Activated T-helper 1 cell treated with anti-CD3 and anti-CD28 coated beads, Interleukin-12 subunit alpha, Interleukin-12 subunit beta, Interleukin-2, Interleukin-4 antibody, amounts not matched to agents 30 ng/mL and 10 ng/mL and 1 ng/mL, durations not matched to agents 14 hours and 24 hours and 36 hours (primary cell): ENCODE measurements at regions of chr12 and their contacts with region 1.

Region 1: DNA sequence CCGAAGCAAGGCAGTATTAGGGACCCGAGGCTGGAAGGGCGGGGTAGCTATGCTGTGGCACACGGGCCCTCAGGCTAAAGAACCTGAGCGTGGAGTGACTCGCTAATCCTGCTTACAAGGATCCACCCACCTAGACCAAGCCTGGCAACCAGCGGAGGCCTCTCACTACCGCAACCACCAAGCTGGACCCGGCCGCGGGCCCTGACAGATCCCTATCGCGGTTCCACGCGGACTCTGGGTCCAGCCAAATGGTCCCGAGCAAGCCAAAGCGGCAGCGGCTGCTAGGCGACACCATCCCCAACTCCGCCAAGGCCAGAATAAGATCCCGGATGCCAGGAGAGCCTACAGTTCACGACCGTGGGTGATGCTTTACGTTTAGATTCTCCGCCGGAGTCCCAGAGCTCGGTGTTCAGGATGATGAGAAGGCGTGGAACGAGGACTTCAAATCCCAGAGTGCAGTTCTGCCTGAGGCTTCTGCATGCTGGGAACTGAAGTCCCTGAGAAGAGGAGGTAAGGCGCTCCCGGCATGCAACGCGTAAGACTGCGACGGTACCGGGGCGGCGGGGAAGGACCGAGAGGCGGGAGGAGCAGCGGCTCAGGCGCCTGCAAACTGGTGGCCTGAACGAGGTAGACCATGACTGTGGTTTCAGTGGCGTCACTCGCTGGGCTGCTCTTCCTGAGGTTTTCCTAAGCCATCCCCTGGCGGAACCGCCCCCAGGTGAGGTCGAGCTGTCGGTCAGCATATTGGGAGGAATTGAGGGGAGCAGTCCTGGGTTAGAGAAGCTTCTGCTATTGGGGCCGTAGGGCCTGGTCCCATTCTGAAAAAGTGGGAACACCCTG is at the starts of genes CEP290 and TMTC3:
- DNase-seq: peak; percentile 92
- H3K4me3 Mint-ChIP-seq: peak within 1 kb of the TSS; percentile 91
- H3K27ac Mint-ChIP-seq: peak within 1 kb of the TSS; percentile 95
- H3K4me1 Mint-ChIP-seq: peaks cover 34% of the 10 kb centered on the region
- H3K27me3 Mint-ChIP-seq: no peaks in the 10 kb centered on the region
- total RNA-seq, gene CEP290: 15.5 and 17.0 TPM in 2 replicates
- total RNA-seq, gene TMTC3: 6.9 and 7.1 TPM in 2 replicates

Region 2: DNA sequence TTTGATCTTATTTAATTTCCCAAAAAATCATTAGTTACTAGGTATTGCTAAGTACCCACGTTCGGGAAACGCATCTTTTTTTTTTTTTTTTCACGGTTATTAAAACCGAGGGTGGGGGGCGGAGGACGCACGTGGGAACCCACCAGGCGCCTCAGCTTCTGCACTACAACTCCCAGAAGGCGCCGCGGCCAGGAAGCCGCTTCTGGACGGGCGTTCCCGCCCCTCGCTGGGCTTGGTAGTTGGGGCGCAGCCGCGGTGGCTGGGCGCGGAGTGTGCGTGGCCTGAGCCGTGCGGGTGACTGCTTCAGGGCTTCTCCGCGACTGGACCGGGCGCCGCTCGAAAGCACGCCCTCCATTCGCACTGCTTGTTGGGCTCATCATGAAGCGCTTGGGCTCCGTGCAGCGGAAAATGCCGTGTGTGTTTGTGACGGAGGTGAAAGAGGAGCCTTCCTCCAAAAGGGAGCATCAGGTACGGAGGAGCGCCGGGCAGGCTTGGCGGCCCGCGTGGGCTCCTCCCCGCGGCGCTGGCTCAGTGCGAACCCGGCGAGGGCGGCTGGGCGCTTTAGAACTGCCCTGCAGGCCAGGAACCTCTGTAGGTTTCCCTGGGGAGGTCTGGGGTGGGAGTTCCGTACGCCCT is 106.6 kb before region 1 on chr12:
- intact Hi-C with region 1: loop called (anchors 1 kb)
- DNase-seq: peak; percentile 84
- H3K4me3 Mint-ChIP-seq: peak overlapping the region; percentile 98
- H3K27ac Mint-ChIP-seq: peak overlapping the region; percentile 96
- H3K4me1 Mint-ChIP-seq: peaks cover 55% of the 10 kb centered on the region
- H3K27me3 Mint-ChIP-seq: no peaks in the 10 kb centered on the region

Region 3: GRCh38 chr12:88111074-88111652 is 30.8 kb before region 1 on chr12:
- intact Hi-C with region 1: loop called (anchors 2 kb)
- DNase-seq: no peak
- H3K4me3 Mint-ChIP-seq: no peak overlapping the region
- H3K27ac Mint-ChIP-seq: no peak overlapping the region
- H3K4me1 Mint-ChIP-seq: no peaks in the 10 kb centered on the region
- H3K27me3 Mint-ChIP-seq: no peaks in the 10 kb centered on the region

Region 4: GRCh38 chr12:88241862-88242570 is 100.0 kb after region 1 on chr12:
- intact Hi-C with region 1: loop called (anchors 1 kb)
- DNase-seq: no peak
- H3K4me3 Mint-ChIP-seq: no peak overlapping the region
- H3K27ac Mint-ChIP-seq: peak overlapping the region; percentile 75
- H3K4me1 Mint-ChIP-seq: peaks cover 28% of the 10 kb centered on the region
- H3K27me3 Mint-ChIP-seq: no peaks in the 10 kb centered on the region

Region 5: GRCh38 chr12:88258396-88258795 is 116.4 kb after region 1 on chr12:
- intact Hi-C with region 1: no loop called
- DNase-seq: no peak
- H3K4me3 Mint-ChIP-seq: no peak overlapping the region
- H3K27ac Mint-ChIP-seq: no peak overlapping the region
- H3K4me1 Mint-ChIP-seq: no peaks in the 10 kb centered on the region
- H3K27me3 Mint-ChIP-seq: peaks cover 3% of the 10 kb centered on the region

Region 6: GRCh38 chr12:88433997-88434703 is 292.2 kb after region 1 on chr12:
- intact Hi-C with region 1: loop called (anchors 1 kb)
- DNase-seq: no peak
- H3K4me3 Mint-ChIP-seq: no peak overlapping the region
- H3K27ac Mint-ChIP-seq: no peak overlapping the region
- H3K4me1 Mint-ChIP-seq: no peaks in the 10 kb centered on the region
- H3K27me3 Mint-ChIP-seq: peaks cover 4% of the 10 kb centered on the region

Region 7: DNA sequence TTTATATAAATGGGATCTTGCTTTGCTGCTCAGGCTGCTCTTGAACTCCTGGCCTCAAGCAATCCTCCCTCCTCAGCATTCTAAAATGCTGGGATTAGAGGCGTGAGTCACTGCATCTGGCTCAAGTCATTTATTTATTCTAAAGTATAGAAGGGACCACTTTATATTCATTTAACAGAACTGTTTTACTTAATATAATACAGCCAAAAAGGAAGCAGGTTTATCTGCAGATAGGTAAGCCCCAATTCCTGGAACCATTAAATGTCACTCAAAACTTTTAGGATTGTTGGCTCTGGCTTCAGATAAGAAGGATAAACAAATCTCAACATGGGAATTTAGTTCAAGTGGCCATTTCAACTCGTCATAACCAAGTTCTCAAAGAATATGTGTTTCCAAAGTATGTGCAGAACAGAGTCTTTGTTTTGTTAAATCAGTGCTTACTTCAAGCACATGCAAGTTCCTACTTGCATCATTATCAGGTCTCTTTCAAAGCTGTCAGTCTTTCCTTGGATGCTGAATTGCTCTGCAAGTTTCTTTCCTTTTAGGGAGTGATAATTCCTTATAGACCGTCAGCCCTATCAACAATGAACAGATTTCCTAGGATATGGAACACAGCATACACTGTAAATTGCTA is 377.9 kb after region 1 on chr12:
- intact Hi-C with region 1: no loop called
- DNase-seq: no peak
- H3K4me3 Mint-ChIP-seq: no peak overlapping the region
- H3K27ac Mint-ChIP-seq: no peak overlapping the region
- H3K4me1 Mint-ChIP-seq: no peaks in the 10 kb centered on the region
- H3K27me3 Mint-ChIP-seq: no peaks in the 10 kb centered on the region